AG04449 (cell line): ENCODE measurements at regions of chr13 and their contacts with region 1.

Region 1: DNA sequence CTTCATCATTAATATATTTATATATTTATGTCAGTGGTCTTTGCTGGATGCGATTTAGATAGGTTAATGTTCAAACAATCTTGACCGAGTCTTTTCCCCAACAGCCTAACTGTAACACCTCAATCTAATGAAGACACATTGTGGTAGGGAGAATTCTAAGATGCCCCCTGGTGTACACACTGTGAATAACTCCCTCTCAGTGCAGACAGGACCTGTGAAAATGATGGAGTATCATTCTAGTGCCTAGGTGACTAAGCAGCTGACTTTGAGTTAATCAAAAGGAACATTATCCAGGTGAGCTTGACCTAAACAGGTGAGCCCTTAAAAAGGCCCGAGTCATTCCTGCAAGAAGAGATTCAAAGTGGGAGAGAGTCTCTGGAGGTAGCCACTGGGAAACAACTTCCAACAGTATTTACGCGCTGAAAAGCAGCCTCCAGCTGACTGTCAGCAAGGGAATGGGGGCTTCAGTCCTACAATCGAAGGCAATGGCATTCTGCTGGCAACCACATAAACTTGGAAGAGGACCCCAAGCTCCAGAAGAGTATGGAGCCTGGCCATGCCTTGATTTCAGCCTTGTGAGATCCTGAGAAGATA is 28.0 kb upstream of the KBTBD7 start:
- DNase-seq: no peak
- H3K4me3 ChIP-seq: no peak overlapping the region
- CTCF ChIP-seq: peak; percentile 60

Region 2: DNA sequence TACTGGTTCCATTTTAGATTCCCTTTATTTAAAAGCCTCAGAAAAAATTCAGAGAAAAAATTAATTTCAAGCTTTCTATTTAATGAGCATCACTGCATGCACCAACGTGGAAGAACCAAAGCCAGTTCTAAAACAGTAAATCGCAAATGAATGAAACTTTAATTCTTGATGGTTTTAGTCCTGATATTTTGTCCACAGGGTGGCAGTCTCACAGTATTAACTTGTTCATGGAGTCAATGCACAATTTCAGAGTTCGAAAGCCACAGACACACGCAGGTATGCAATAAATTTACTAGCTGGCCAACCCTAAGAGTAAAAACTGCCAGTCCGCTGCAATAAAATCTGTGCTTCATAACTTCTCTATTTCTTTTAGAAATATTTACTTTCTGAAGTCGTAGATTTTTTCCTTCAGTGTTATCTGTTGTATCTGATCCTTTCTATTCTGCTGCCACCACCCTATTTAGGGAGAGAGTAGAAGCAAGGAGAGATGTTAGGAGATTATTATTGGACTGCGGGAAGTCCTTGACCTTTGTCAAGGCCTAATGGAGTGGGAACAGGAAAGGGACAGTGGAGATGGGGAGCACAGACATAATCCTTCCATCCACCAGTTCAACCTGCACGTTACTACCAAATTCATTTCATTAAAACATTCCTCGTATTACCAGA is 168.0 kb before region 1 on chr13:
- CTCF ChIA-PET with region 1: interaction called, 12 read pairs
- POLR2A ChIA-PET with region 1: no interaction called
- DNase-seq: no peak
- H3K4me3 ChIP-seq: no peak overlapping the region
- CTCF ChIP-seq: peak; percentile 45

Region 3: GRCh38 chr13:41075034-41075433 is 147.3 kb before region 1 on chr13:
- CTCF ChIA-PET with region 1: interaction called, 19 read pairs
- POLR2A ChIA-PET with region 1: no interaction called
- DNase-seq: no peak
- H3K4me3 ChIP-seq: no peak overlapping the region
- CTCF ChIP-seq: peak; percentile 12

Region 4: DNA sequence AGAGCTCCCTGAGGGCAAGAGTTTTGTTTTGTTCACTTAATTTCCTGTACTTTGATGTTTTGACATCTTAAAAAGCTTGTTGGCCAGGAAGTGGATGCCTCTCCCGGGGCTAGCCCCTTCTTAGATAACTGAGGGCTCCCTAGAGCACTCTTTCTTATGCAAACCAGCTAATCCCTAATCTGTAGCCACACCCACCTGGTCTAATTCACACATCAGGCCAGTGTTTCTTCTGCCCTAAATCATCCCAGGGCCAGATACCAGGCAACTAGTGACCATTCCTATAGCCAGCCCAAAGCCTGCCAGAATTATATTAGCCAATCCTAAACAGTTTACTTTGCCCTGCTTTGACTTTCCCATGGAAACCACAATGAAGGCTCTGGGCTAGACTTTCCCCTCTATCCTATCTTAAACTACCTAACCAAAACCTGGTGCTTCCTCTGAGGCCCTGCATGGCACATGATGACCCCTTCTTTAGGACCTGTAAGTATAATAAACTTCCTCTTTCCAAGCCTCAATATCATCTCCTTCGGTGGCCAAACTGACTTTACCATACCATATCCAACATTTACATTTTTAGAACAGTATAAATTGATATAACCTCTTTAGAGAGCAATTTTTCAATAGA is 136.3 kb before region 1 on chr13:
- CTCF ChIA-PET with region 1: interaction called, 16 read pairs
- POLR2A ChIA-PET with region 1: no interaction called
- DNase-seq: no peak
- H3K4me3 ChIP-seq: no peak overlapping the region
- CTCF ChIP-seq: no peak

Region 5: DNA sequence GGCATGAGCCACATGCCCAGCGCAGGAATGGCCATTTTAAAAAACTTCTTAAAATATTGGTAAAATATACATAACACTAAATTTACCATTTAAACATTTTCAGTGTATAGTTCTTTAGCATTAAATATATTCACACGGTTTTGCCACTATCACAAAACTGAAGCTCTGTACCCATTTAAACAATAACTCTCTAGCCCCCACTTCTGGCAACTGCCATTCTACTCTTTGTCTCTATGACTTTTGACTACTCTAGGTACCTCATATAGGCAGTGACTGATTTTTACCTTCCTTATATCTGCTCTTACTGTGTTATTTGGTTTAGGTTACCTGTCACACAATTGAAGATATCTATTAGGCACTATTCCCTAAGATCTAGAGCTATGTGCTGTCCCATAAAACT is 25.7 kb before region 1 on chr13:
- CTCF ChIA-PET with region 1: interaction called, 14 read pairs
- POLR2A ChIA-PET with region 1: no interaction called
- DNase-seq: no peak
- H3K4me3 ChIP-seq: no peak overlapping the region
- CTCF ChIP-seq: peak; percentile 25

Region 6: GRCh38 chr13:41546372-41547190 is 324.2 kb after region 1 on chr13:
- CTCF ChIA-PET with region 1: no interaction called
- POLR2A ChIA-PET with region 1: no interaction called
- DNase-seq: peak; percentile 60
- H3K4me3 ChIP-seq: no peak overlapping the region
- CTCF ChIP-seq: no peak